ENCODE measurements at regions of chr11 and their contacts with region 1.

Region 1: GRCh38 chr11:130131961-130132850 is 27.4 kb upstream of the ST14 start:
- DNase-seq: peak in 1 of 2 donors; percentile 56
- ATAC-seq: peak in 7 of 8 donors; percentile 64 to 82 (median 74)
- H3K4me3 ChIP-seq: no peak overlapping the region
- H3K27ac ChIP-seq: no peak overlapping the region
- H3K4me1 ChIP-seq: peaks cover 0 to 13% (median 0%) of the 10 kb centered on the region in 9 donors
- H3K27me3 ChIP-seq: no peaks in the 10 kb centered on the region
- CTCF ChIP-seq: peak; percentile 80 to 89 (median 86)

Region 2: GRCh38 chr11:129922674-129923073 is 209.5 kb before region 1 on chr11:
- intact Hi-C with region 1: loop called (anchors 1 to 5 kb)
- DNase-seq: no peak
- ATAC-seq: no peak
- H3K4me3 ChIP-seq: no peak overlapping the region
- H3K27ac ChIP-seq: no peak overlapping the region
- H3K4me1 ChIP-seq: peaks cover 0 to 5% (median 0%) of the 10 kb centered on the region in 9 donors
- H3K27me3 ChIP-seq: no peaks in the 10 kb centered on the region
- CTCF ChIP-seq: no peak

Region 3: GRCh38 chr11:129930296-129930695 is 201.9 kb before region 1 on chr11:
- intact Hi-C with region 1: loop called in 3 of 10 experiments (anchors 2 to 5 kb)
- DNase-seq: no peak
- ATAC-seq: no peak
- H3K4me3 ChIP-seq: no peak overlapping the region
- H3K27ac ChIP-seq: no peak overlapping the region
- H3K4me1 ChIP-seq: peaks cover 0 to 14% (median 0%) of the 10 kb centered on the region in 9 donors
- H3K27me3 ChIP-seq: no peaks in the 10 kb centered on the region
- CTCF ChIP-seq: no peak

Region 4: DNA sequence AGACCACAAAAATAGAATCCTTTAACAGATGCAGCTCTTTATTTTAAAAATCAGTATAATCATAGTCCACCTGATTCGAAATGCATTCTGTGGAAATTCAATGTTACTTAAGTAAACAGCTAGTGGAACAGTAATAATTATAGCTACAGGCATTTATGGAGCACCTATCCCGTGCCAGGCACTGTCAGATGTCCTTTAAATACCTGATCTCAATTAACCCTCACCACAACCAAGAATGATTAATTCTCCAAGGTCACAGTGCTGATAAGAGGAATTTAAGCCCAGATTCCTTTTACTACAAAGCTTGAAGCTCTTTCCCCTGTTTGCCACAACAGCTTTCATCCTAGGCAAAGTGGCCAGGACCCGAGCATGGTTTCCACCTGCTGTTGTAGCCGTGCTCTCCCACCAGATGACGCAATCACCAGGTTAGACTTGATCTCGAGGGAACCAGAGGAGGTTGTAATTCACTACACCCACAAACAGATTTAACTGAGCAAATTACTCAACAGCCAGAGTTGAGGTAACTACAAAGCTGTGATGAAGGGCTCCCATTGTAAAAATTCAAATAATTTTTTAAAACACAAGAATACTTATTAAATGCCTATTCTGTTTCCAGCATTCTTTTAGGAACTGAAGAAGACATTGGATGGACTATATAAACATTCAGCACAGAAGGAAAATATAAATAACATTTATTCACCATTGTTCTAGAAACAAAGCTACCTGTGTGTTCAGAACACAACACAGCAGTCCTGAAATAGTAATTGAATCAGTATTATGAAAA is 139.9 kb before region 1 on chr11:
- intact Hi-C with region 1: loop called in 3 of 10 experiments (anchors 5 to 10 kb)
- DNase-seq: no peak
- ATAC-seq: peak in 5 of 8 donors; percentile 41 to 69 (median 64)
- H3K4me3 ChIP-seq: no peak overlapping the region
- H3K27ac ChIP-seq: no peak overlapping the region
- H3K4me1 ChIP-seq: peaks cover 3 to 29% (median 20%) of the 10 kb centered on the region in 9 donors
- H3K27me3 ChIP-seq: no peaks in the 10 kb centered on the region
- CTCF ChIP-seq: peak in 7 of 9 donors; percentile 7 to 53 (median 22)

Region 5: GRCh38 chr11:130002846-130003716 is 129.1 kb before region 1 on chr11:
- intact Hi-C with region 1: loop called in 7 of 10 experiments (anchors 2 to 10 kb)
- DNase-seq: peak; percentile 93 to 96
- ATAC-seq: peak; percentile 86 to 97 (median 94)
- H3K4me3 ChIP-seq: peak overlapping the region; percentile 8 to 92 (median 74)
- H3K27ac ChIP-seq: peak overlapping the region; percentile 92 to 100 (median 99)
- H3K4me1 ChIP-seq: peaks cover 3 to 35% (median 18%) of the 10 kb centered on the region in 9 donors
- H3K27me3 ChIP-seq: no peaks in the 10 kb centered on the region
- CTCF ChIP-seq: no peak

Region 6: DNA sequence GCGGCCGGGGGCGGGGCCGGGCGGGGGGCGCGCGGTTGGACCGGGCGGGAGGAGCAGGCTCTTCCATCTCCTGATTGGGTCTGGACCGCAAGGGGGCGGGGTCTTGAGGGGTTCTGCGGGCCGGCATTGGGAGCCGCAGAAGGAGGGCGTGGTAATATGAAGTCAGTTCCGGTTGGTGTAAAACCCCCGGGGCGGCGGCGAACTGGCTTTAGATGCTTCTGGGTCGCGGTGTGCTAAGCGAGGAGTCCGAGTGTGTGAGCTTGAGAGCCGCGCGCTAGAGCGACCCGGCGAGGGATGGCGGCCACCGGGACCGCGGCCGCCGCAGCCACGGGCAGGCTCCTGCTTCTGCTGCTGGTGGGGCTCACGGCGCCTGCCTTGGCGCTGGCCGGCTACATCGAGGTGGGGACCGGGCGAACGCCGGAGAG is 62.5 kb before region 1 on chr11 and contains the start of gene APLP2:
- intact Hi-C with region 1: loop called in 4 of 10 experiments (anchors 5 to 10 kb)
- DNase-seq: peak; percentile 99 to 100
- ATAC-seq: peak; percentile 94 to 98 (median 96)
- H3K4me3 ChIP-seq: peak within 1 kb of the TSS; percentile 64 to 86 (median 80)
- H3K27ac ChIP-seq: peak within 1 kb of the TSS; percentile 81 to 99 (median 95)
- H3K4me1 ChIP-seq: peaks cover 0 to 34% (median 21%) of the 10 kb centered on the region in 9 donors
- H3K27me3 ChIP-seq: no peaks in the 10 kb centered on the region
- CTCF ChIP-seq: no peak
- total RNA-seq, gene APLP2: 265 to 414 (median 309) TPM

Region 7: DNA sequence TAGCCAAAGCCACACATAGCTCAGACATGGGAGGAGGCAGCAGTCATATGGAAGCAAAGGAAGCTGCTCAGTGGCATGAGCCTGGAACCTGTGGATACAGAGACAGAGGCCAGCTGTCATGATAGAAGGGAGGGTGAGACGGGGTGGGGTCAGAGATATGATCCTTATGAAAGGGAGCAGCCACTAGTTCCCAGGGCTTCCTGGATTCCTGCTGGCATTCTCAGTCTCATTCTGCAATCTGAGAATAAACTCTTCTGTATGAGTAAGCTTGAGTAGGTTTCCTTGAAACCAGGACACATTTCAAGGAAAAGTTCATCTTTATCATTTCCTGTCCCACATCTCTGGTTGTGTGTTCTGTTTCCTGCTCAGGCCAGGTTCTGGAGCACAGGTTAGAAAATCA is 1004.3 kb after region 1 on chr11:
- intact Hi-C with region 1: no loop called
- DNase-seq: no peak
- ATAC-seq: no peak
- H3K4me3 ChIP-seq: no peak overlapping the region
- H3K27ac ChIP-seq: no peak overlapping the region
- H3K4me1 ChIP-seq: no peaks in the 10 kb centered on the region
- H3K27me3 ChIP-seq: peaks cover 0 to 7% (median 0%) of the 10 kb centered on the region in 7 donors
- CTCF ChIP-seq: no peak